ENCODE measurements at regions of chr11 and their contacts with region 1.

Region 1: DNA sequence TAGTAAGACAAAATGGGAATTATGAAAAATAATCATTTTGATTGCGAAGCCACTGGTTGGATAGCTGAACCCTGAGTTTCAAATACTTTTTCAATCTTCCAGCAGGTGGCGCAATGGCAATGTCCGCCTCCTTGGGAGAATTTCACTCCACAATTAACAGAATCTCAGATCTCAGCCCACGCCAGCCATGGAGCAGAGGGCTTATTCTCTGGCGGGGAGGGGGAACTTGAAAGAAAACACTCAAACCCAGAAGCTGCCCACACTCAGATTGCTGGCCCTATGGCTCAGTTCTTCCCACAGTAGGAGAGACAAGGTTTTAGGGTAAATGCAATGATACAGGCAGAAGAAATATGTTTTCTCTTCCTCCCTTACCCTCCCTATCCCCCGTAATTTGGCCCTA is 38.7 kb upstream of the RCN1 start:
- DNase-seq: peak in 5 of 6 donors; percentile 16 to 64 (median 38)
- ATAC-seq: peak in 3 of 4 donors; percentile 74 to 81 (median 78)
- H3K4me3 ChIP-seq: no peak overlapping the region
- H3K27ac ChIP-seq: no peak overlapping the region
- H3K4me1 ChIP-seq: no peaks in the 10 kb centered on the region
- H3K27me3 ChIP-seq: peaks cover 0 to 7% (median 3%) of the 10 kb centered on the region in 4 donors
- CTCF ChIP-seq: peak; percentile 49 to 70 (median 62)

Region 2: DNA sequence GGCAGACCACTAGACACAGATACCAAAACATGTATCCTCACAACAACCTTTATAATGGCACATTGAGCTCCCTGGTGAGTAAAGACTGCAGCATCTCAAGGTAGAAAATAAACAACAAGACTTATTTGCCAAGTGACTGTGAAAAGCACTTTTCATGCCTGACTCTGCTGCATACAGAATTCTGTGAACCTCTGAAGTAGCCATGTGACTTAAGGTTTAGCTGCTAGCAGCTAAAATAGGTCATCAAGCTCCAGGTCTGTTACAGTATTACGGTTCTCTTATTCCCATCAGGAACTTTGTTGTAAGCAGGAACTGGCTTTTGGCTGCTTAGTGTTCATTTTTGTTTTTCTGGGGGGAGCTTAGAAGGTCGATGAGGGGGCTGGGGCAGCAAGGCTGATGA is 380.5 kb before region 1 on chr11:
- intact Hi-C with region 1: no loop called
- DNase-seq: no peak
- ATAC-seq: peak in 2 of 4 donors; percentile 40 to 41
- H3K4me3 ChIP-seq: no peak overlapping the region
- H3K27ac ChIP-seq: no peak overlapping the region
- H3K4me1 ChIP-seq: no peaks in the 10 kb centered on the region
- H3K27me3 ChIP-seq: no peaks in the 10 kb centered on the region
- CTCF ChIP-seq: no peak

Region 3: DNA sequence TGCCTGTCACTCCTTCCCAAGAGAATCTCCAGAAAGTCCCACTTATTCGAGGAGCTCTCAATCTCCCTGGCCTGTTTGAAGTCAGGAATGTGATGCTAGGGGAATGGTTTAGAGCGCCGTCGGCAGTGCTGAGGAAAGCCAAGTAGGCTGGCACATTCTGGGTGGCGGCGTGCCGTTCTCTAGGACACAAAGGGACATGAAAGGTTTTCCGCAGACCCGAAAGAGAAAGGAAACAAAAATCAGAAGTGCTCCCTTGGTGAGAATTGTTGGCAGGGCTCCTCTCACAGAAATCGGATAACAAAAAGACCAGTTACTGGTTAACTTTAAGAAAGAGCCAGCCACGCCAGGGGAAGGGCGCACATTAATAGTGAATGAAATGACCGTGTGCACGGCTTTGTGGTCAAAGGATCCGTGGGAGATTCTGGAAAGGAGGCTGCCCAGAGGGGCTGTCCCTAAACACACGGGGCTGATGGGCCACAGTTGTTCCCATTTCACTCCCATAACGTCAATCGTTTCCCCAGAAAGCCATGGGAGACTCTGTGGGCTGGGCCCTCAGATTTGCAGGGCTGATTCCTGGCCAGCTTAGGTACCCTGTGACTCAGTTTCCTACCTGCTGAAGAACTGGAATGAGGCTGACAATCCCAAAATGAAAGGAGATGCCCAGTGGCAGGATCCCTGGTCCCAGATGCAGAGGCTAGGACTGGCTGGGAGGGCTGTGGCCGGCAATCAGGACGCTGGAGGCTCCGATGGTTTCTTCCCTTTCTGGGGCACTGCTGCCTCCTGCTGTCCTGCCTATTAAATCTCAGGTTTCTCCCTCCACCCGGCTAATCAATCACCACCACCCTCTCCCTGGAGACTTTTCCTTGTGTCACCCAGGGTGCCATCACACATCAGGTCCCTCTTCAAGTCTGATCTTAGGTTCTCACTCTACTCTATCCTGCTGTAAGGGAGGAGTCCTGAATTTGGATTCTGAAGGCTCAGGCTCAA is 120.9 kb after region 1 on chr11:
- intact Hi-C with region 1: loop called in 2 of 3 experiments (anchors 2 to 5 kb)
- DNase-seq: peak in 5 of 6 donors; percentile 21 to 66 (median 45)
- ATAC-seq: peak; percentile 67 to 91 (median 90)
- H3K4me3 ChIP-seq: peak overlapping the region in 1 of 4 donors; percentile 30
- H3K27ac ChIP-seq: no peak overlapping the region
- H3K4me1 ChIP-seq: no peaks in the 10 kb centered on the region
- H3K27me3 ChIP-seq: peaks cover 0 to 5% (median 2%) of the 10 kb centered on the region in 4 donors
- CTCF ChIP-seq: peak in 2 of 4 donors; percentile 27 to 33